ENCODE measurements at regions of chr11 and their contacts with region 1.

Region 1: GRCh38 chr11:45917623-45918330 is at the start of gene PEX16:
- DNase-seq: peak; percentile 96
- ATAC-seq: peak; percentile 92 to 97 (median 94)
- H3K4me3 ChIP-seq: peak within 1 kb of the TSS; percentile 75 to 99 (median 92)
- H3K27ac ChIP-seq: peak within 1 kb of the TSS; percentile 72 to 96 (median 89)
- H3K4me1 ChIP-seq: peaks cover 15 to 57% (median 33%) of the 10 kb centered on the region in 9 donors
- H3K27me3 ChIP-seq: peaks cover 0 to 15% (median 12%) of the 10 kb centered on the region in 7 donors
- CTCF ChIP-seq: no peak
- total RNA-seq, gene PEX16: 10.8 to 17.8 (median 13.6) TPM

Region 2: DNA sequence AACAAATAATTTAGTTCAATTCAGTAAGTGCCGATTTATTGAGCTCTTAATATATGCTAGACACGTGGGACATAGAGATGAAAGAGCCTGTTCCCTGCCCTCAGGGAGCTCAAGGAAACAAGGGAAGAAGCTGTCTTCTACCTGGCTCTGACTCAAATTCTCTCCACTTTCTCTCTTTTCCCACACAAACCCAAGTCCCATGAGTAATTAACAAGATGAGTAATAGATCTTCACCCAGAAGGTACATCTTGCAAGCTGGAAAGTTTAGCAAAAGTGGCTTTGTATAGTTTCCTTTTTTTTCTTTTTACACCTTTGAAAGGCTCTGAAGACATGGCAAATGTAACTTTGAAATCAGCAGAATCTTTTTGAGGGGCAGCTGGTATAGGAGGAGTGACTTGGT is 204.2 kb before region 1 on chr11:
- intact Hi-C with region 1: no loop called
- DNase-seq: no peak
- ATAC-seq: no peak
- H3K4me3 ChIP-seq: no peak overlapping the region
- H3K27ac ChIP-seq: no peak overlapping the region
- H3K4me1 ChIP-seq: no peaks in the 10 kb centered on the region
- H3K27me3 ChIP-seq: peaks cover 0 to 20% (median 3%) of the 10 kb centered on the region in 7 donors
- CTCF ChIP-seq: no peak

Region 3: GRCh38 chr11:45859661-45860140 is 58.1 kb before region 1 on chr11:
- intact Hi-C with region 1: loop called in 1 of 10 experiments (anchors 5 kb)
- DNase-seq: peak; percentile 93 to 94
- ATAC-seq: peak; percentile 81 to 89 (median 86)
- H3K4me3 ChIP-seq: peak overlapping the region in 1 of 10 donors; percentile 6
- H3K27ac ChIP-seq: peak overlapping the region; percentile 68 to 99 (median 90)
- H3K4me1 ChIP-seq: peaks cover 35 to 90% (median 65%) of the 10 kb centered on the region in 9 donors
- H3K27me3 ChIP-seq: no peaks in the 10 kb centered on the region
- CTCF ChIP-seq: no peak

Region 4: GRCh38 chr11:45899448-45900173 is 18.2 kb before region 1 on chr11:
- intact Hi-C with region 1: loop called in 1 of 10 experiments (anchors 2 kb)
- DNase-seq: peak; percentile 83 to 85
- ATAC-seq: peak; percentile 73 to 90 (median 85)
- H3K4me3 ChIP-seq: peak overlapping the region; percentile 28 to 71 (median 62)
- H3K27ac ChIP-seq: peak overlapping the region in 8 of 10 donors; percentile 39 to 82 (median 70)
- H3K4me1 ChIP-seq: peaks cover 10 to 31% (median 21%) of the 10 kb centered on the region in 9 donors
- H3K27me3 ChIP-seq: peaks cover 0 to 60% (median 0%) of the 10 kb centered on the region in 7 donors
- CTCF ChIP-seq: peak in 1 of 9 donors; percentile 7

Region 5: GRCh38 chr11:46119352-46120216 is 201.8 kb after region 1 on chr11:
- intact Hi-C with region 1: no loop called
- DNase-seq: peak; percentile 53 to 66
- ATAC-seq: peak; percentile 6 to 59 (median 28)
- H3K4me3 ChIP-seq: peak overlapping the region; percentile 57 to 84 (median 74)
- H3K27ac ChIP-seq: peak overlapping the region; percentile 72 to 97 (median 94)
- H3K4me1 ChIP-seq: peaks cover 0 to 60% (median 46%) of the 10 kb centered on the region in 9 donors
- H3K27me3 ChIP-seq: no peaks in the 10 kb centered on the region
- CTCF ChIP-seq: no peak